Natural killer cell (primary cell): ENCODE measurements at regions of chr17 and their contacts with region 1.

Region 1: GRCh38 chr17:75182569-75183450 is at the start of gene SUMO2:
- DNase-seq: peak; percentile 97 to 98
- ATAC-seq: peak; percentile 81 to 94 (median 83)
- H3K4me3 ChIP-seq: peak within 1 kb of the TSS; percentile 83
- H3K4me3 Mint-ChIP-seq: peak within 1 kb of the TSS; percentile 95
- H3K27ac ChIP-seq: peak within 1 kb of the TSS; percentile 97
- H3K27ac Mint-ChIP-seq: peak within 1 kb of the TSS; percentile 84 to 97
- H3K4me1 ChIP-seq: peaks cover 17% of the 10 kb centered on the region
- H3K4me1 Mint-ChIP-seq: peaks cover 27 to 31% of the 10 kb centered on the region in 2 donors
- H3K27me3 ChIP-seq: no peaks in the 10 kb centered on the region
- H3K27me3 Mint-ChIP-seq: no peaks in the 10 kb centered on the region
- CTCF ChIP-seq: peak; percentile 1
- total RNA-seq, gene SUMO2: 240 to 294 (median 250) TPM

Region 2: GRCh38 chr17:75199886-75200618 is 17.2 kb after region 1 on chr17:
- intact Hi-C with region 1: loop called (anchors 2 kb)
- DNase-seq: no peak
- ATAC-seq: no peak
- H3K4me3 ChIP-seq: no peak overlapping the region
- H3K4me3 Mint-ChIP-seq: no peak overlapping the region
- H3K27ac ChIP-seq: no peak overlapping the region
- H3K27ac Mint-ChIP-seq: no peak overlapping the region
- H3K4me1 ChIP-seq: peaks cover 8% of the 10 kb centered on the region
- H3K4me1 Mint-ChIP-seq: peaks cover 7 to 9% of the 10 kb centered on the region in 2 donors
- H3K27me3 ChIP-seq: no peaks in the 10 kb centered on the region
- H3K27me3 Mint-ChIP-seq: no peaks in the 10 kb centered on the region
- CTCF ChIP-seq: no peak

Region 3: DNA sequence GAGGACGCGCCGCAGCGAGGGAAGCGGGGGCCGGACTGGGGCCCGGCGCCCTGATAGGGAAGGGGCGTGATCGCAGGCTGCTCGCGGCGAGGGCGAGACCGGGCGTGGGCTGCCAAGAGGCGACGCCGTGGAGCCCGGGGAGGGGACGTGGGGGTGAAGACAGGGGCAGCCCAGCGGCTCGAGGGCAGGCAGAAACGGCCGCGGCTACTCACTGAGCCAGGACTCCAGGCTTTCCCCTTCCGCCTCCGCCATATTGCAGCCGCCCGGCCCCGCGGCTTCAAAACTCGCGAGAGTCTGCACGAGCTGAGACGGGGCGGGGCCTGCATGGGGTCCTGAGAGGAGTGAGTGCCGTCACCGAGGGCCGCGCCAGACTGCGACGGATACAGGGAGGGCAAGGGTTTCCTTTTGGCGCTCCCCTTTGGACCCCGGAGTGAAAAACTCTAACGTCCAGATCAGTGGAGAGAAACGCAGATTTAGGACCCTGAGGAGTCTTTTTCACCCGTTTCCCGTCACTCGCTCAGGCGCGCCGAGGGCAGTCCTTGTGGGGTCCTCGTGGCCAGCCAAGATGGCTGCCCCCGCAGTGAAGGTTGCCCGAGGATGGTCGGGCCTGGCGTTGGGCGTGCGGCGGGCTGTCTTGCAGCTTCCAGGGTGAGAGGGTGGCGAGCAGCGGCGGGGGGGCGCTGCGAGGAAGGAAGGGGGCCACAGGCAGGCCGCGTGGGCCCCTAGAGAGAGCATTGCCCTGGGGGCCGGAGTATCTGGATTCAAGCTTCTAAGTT is 78.7 kb after region 1 on chr17 and contains the starts of genes GGA3 and MRPS7:
- intact Hi-C with region 1: loop called (anchors 1 kb)
- DNase-seq: peak; percentile 95 to 97
- ATAC-seq: peak; percentile 93 to 98 (median 93)
- H3K4me3 ChIP-seq: peak within 1 kb of the TSS; percentile 80
- H3K4me3 Mint-ChIP-seq: peak within 1 kb of the TSS; percentile 97
- H3K27ac ChIP-seq: peak within 1 kb of the TSS; percentile 97
- H3K27ac Mint-ChIP-seq: peak within 1 kb of the TSS; percentile 99 to 100
- H3K4me1 ChIP-seq: peaks cover 23% of the 10 kb centered on the region
- H3K4me1 Mint-ChIP-seq: peaks cover 52 to 59% of the 10 kb centered on the region in 2 donors
- H3K27me3 ChIP-seq: no peaks in the 10 kb centered on the region
- H3K27me3 Mint-ChIP-seq: no peaks in the 10 kb centered on the region
- CTCF ChIP-seq: no peak
- total RNA-seq, gene GGA3: 78.1 to 97.3 (median 94.0) TPM
- total RNA-seq, gene MRPS7: 27.3 to 29.4 (median 27.9) TPM

Region 4: GRCh38 chr17:75515496-75516254 is 332.9 kb after region 1 on chr17 and contains the start of gene CASKIN2:
- intact Hi-C with region 1: no loop called
- DNase-seq: peak; percentile 72 to 89
- ATAC-seq: peak; percentile 64 to 83 (median 67)
- H3K4me3 ChIP-seq: peak within 1 kb of the TSS; percentile 83
- H3K4me3 Mint-ChIP-seq: peak within 1 kb of the TSS; percentile 80
- H3K27ac ChIP-seq: no peak within 1 kb of the TSS
- H3K27ac Mint-ChIP-seq: peak within 1 kb of the TSS in 1 of 2 donors; percentile 88
- H3K4me1 ChIP-seq: peaks cover 40% of the 10 kb centered on the region
- H3K4me1 Mint-ChIP-seq: peaks cover 19 to 23% of the 10 kb centered on the region in 2 donors
- H3K27me3 ChIP-seq: no peaks in the 10 kb centered on the region
- H3K27me3 Mint-ChIP-seq: no peaks in the 10 kb centered on the region
- CTCF ChIP-seq: peak; percentile 93
- total RNA-seq, gene CASKIN2: 0.49 to 1.8 (median 1.7) TPM